ENCODE measurements at regions of chr1 and their contacts with region 1.

Region 1: DNA sequence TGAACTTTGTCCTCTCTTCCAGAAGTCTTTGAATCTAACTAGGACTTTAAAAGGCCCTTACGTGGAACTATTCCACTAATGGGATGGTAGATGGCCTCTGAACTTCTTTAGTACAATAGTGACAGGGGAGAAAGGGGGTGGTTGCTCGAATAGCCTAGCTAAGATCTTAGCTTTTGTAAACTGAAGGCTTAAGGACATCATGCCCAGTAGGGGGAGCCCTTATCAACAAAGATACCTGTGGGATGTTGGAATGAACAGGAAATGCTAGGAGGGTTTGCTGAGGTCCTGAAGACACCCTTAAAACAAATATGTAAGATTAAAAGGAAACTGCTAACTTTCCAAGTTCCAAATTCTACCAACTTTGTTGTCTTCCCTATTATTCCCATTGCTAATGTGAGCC is 33.2 kb downstream of the NHLH2 start:
- DNase-seq: no peak
- ATAC-seq: peak in 1 of 2 donors; percentile 41
- H3K4me3 ChIP-seq: no peak overlapping the region
- H3K27ac ChIP-seq: no peak overlapping the region
- H3K4me1 ChIP-seq: no peaks in the 10 kb centered on the region
- H3K27me3 ChIP-seq: no peaks in the 10 kb centered on the region
- CTCF ChIP-seq: peak in 4 of 5 experiments; percentile 24 to 56 (median 44)
- POLR2A ChIP-seq: no peak

Region 2: GRCh38 chr1:115976062-115976920 is 168.6 kb after region 1 on chr1 and contains the start of gene SLC22A15:
- in situ Hi-C with region 1: loop called (anchors 10 to 25 kb)
- intact Hi-C with region 1: loop called (anchors 2 kb)
- DNase-seq: peak; percentile 17 to 26
- ATAC-seq: peak; percentile 51 to 53
- H3K4me3 ChIP-seq: peak within 1 kb of the TSS; percentile 45 to 53 (median 48)
- H3K27ac ChIP-seq: peak within 1 kb of the TSS; percentile 18 to 38 (median 23)
- H3K4me1 ChIP-seq: no peaks in the 10 kb centered on the region
- H3K27me3 ChIP-seq: peaks cover 14 to 32% (median 15%) of the 10 kb centered on the region in 3 donors
- CTCF ChIP-seq: no peak
- POLR2A ChIP-seq: no peak
- total RNA-seq, gene SLC22A15: 0.15 to 0.62 (median 0.41) TPM

Region 3: GRCh38 chr1:115980998-115981993 is 173.6 kb after region 1 on chr1:
- in situ Hi-C with region 1: loop called (anchors 10 to 25 kb)
- intact Hi-C with region 1: loop called (anchors 2 kb)
- DNase-seq: no peak
- ATAC-seq: no peak
- H3K4me3 ChIP-seq: no peak overlapping the region
- H3K27ac ChIP-seq: no peak overlapping the region
- H3K4me1 ChIP-seq: no peaks in the 10 kb centered on the region
- H3K27me3 ChIP-seq: peaks cover 8 to 13% (median 11%) of the 10 kb centered on the region in 3 donors
- CTCF ChIP-seq: peak in 3 of 5 experiments; percentile 22 to 54 (median 38)
- POLR2A ChIP-seq: no peak

Measured in gastrocnemius medialis (tissue), 4 donors.